ENCODE measurements at regions of chr3 and their contacts with region 1.

Region 1: GRCh38 chr3:194682694-194683310 is 2.9 kb upstream of the FAM43A start:
- DNase-seq: peak; percentile 83

Region 2: GRCh38 chr3:194871143-194871863 is 188.5 kb after region 1 on chr3:
- intact Hi-C with region 1: loop called in 1 of 2 experiments (anchors 10 kb)
- DNase-seq: peak; percentile 89

Region 3: DNA sequence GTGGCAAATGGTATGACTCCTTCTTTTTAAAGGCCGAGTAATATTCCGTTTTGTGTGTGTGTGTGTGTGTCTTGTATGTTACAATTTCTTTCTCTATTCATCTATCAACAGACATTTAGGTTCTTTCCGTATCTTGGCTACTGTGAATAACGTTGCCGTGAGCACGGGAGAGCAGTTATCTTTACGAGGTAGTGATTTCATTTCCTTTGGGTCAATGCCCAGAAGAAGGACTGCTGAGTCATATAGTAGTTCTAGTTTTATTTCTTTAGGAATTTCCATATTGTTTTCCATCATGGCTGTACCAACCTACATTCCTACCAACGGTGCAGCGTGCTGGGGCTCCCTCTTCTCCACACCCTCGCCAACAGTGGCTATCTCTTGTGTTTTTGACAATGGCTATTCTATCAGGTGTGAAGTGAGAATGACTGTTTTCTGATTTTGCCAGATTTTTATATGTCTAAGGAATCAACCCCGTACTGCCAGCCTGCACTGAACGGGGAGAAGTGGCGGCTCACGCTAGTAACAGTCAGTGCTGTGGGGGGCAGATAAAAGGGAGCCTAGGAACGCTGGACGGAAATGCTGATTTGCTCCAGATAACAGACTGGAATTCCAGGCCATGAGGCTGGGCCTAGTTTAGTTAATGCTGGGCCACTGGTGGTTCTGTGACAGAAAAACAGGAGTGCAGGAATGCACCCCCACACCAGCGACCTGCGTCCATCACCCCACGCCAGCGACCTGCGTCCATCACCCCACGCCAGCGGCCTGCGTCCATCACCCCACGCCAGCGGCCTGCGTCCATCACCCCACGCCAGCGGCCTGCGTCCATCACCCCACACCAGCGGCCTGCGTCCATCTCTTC is 420.0 kb after region 1 on chr3:
- intact Hi-C with region 1: loop called (anchors 2 kb)
- DNase-seq: peak; percentile 49

Region 4: DNA sequence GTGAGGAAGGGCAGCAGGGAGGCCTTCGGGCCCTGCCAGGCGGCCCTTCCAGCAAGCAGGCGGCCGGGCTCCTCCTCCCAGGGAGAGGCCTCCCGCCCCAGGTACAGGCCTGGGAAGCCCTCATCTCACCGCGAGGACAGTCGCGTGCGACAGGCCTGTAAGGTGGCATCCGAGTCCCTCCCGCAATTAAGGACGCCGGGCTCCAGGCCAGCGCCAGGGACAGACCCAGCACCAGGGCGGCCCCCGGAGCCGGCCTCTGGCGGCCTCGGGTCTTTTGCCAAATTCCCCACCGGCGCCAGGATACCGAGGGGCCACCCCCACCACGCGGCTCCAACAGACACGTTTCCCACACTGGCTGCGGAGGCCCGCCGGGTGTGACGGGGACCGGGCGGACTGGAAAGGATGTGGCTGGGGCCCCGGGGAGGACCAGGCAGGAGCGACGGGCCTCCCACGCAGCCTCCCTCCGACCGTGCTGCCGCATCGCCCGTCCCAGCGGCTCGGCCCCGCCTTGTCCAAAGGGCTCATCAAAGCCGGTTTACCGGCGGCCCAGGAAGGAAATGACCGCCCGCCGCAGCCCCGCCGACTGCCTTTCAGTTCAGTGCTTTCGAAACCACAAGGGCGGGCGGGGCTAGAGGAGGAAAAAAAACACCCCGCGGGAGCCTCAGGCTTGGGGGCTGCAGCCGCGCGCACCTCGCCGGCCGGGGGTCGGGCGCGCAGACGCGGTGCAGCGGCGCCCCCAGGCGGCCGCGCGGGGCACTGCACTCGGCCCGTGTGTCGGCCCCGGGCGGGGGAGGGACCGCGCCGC is 576.9 kb after region 1 on chr3:
- intact Hi-C with region 1: loop called (anchors 1 to 2 kb)
- DNase-seq: peak; percentile 97

Region 5: DNA sequence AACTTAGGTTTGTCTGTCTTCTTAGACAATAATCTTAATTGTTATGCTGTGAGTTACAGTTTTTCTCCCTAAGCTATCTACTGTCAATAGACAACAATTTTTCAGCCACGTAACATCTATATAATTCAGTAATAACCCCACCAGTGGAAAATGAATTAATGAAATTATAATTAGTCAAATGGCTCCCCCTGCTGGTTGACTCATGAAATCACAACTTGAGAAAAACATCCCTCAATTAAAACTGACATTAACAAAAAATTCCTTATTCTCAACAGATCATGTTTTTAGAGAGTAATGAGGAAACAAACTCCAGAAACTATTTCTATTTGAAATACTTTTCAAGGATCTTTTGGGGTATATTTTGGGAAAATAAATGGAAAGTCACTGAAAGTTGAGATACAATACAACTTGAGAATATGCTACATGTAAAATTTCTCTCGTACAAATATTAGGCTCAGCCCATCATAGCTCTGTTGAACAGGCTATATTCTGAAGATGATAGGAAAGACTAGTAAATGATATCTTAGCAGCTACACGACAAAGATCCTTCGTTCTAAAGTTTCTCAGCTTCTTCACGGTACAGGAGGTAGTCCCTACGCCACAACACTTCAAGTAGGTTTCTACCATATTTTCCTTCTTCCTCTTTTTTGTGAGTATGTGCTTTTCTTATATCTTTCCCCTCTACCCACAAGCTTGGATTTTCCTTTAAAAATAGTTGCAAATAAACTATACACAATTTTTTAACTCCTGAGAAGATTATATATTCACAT is 839.6 kb after region 1 on chr3:
- intact Hi-C with region 1: loop called (anchors 10 kb)
- DNase-seq: no peak

Region 6: DNA sequence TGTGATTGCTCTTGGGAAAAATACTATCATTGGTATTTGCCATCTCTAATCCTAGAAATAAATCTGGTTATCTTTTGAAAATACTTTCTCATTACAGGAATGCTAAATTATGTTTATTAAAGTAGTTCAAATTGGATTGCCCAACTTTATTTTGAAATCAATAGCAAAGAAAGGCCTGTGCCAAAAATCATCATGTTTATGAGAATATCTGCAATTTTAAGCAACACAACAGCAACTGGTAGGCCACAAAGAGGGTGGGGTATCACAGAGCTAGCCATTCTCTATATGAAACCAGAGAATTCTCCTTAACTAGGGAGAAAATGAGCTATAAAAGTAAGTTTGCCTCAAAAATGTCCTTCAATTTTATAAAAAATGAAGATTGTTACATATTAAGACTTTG is 1667.3 kb after region 1 on chr3:
- intact Hi-C with region 1: no loop called
- DNase-seq: no peak

Measured in posterior vena cava (tissue), 2 donors.